ENCODE measurements at regions of chr4 and their contacts with region 1.

Region 1: DNA sequence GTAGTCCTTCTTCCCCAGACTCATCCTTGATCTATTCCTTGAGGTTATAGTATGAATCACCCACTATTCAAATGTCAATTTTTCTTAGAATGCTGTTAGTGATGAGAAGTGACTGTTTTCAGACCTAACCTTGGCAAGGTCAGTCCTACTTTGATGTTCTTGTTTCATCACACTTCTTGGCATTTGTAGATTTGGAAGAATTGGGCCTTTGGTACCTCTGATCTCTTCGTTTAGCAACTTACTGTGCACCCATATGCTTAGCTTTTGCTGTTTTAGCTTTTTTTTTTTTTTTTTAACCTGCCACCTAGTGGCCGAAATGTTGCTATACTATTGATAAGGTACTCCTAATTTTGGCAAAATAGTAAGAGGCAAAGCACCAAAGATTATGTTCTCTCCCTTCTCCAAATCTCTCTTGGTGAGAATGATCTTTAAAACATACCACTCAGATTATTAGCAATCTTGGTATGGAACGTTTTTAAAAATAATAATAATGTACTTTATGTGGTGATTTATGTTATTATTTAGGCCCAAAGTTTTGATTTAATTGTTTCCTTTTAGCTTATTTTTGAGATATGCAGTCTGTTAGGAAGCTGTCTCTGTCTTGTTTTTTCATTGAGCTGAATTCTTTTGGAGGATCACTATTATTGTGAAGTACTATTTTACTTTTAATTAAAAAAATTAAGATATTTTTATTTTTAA is 16.6 kb downstream of the DCK start:
- DNase-seq: no peak
- ATAC-seq: no peak
- H3K4me3 ChIP-seq: no peak overlapping the region
- H3K27ac ChIP-seq: no peak overlapping the region
- H3K4me1 ChIP-seq: no peaks in the 10 kb centered on the region
- H3K27me3 ChIP-seq: no peaks in the 10 kb centered on the region
- CTCF ChIP-seq: peak; percentile 22 to 68 (median 46)
- POLR2A ChIP-seq: no peak

Region 2: DNA sequence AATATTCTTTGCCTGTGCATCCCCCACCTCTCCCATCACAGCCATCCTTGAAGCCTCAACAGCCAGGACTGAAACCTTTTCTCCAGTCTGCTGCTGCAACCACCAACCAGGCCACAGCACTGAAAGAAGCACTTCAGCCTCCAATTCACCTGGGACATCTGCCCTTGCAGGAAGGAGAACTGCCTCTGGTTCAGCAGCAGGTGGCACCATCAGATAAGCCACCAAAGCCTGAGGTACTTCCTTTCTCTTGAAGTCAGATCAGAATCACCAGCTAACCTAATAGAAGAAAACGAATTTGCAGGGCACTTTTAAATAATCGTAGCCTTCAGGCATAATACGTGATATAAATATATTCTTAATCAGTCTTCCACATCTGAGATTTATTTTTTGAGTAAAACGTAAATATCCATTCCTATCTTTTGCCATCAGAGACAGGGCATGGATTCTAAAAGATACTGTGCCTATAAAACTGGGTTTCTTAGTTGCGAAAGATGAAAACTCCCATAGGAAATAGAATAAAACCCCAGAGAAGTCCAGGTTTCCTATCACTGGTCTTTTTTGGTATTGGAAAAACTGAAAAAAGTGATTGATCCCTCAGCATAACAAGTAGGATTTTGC is 408.5 kb before region 1 on chr4:
- in situ Hi-C with region 1: no loop called
- intact Hi-C with region 1: loop called (anchors 5 kb)
- DNase-seq: peak; percentile 18 to 46
- ATAC-seq: peak; percentile 80 to 90
- H3K4me3 ChIP-seq: no peak overlapping the region
- H3K27ac ChIP-seq: no peak overlapping the region
- H3K4me1 ChIP-seq: no peaks in the 10 kb centered on the region
- H3K27me3 ChIP-seq: no peaks in the 10 kb centered on the region
- CTCF ChIP-seq: peak; percentile 57 to 88 (median 71)
- POLR2A ChIP-seq: no peak

Region 3: GRCh38 chr4:70651864-70652506 is 358.1 kb before region 1 on chr4:
- in situ Hi-C with region 1: loop called in 2 of 4 experiments (anchors 25 kb)
- intact Hi-C with region 1: loop called (anchors 1 kb)
- DNase-seq: no peak
- ATAC-seq: peak in 1 of 2 donors; percentile 51
- H3K4me3 ChIP-seq: no peak overlapping the region
- H3K27ac ChIP-seq: no peak overlapping the region
- H3K4me1 ChIP-seq: peaks cover 0 to 4% of the 10 kb centered on the region in 2 donors
- H3K27me3 ChIP-seq: no peaks in the 10 kb centered on the region
- CTCF ChIP-seq: peak; percentile 36 to 57 (median 43)
- POLR2A ChIP-seq: no peak

Measured in gastrocnemius medialis (tissue), 4 donors.